Posterior vena cava (tissue), 2 donors: ENCODE measurements at regions of chr2 and their contacts with region 1.

Region 1: GRCh38 chr2:158968396-158969161 is at the start of gene TANC1:
- DNase-seq: peak; percentile 97
- total RNA-seq, gene TANC1: 35.1 to 44.5 TPM

Region 2: GRCh38 chr2:158914731-158915130 is 53.8 kb before region 1 on chr2:
- intact Hi-C with region 1: loop called in 1 of 2 experiments (anchors 10 kb)
- DNase-seq: no peak

Region 3: DNA sequence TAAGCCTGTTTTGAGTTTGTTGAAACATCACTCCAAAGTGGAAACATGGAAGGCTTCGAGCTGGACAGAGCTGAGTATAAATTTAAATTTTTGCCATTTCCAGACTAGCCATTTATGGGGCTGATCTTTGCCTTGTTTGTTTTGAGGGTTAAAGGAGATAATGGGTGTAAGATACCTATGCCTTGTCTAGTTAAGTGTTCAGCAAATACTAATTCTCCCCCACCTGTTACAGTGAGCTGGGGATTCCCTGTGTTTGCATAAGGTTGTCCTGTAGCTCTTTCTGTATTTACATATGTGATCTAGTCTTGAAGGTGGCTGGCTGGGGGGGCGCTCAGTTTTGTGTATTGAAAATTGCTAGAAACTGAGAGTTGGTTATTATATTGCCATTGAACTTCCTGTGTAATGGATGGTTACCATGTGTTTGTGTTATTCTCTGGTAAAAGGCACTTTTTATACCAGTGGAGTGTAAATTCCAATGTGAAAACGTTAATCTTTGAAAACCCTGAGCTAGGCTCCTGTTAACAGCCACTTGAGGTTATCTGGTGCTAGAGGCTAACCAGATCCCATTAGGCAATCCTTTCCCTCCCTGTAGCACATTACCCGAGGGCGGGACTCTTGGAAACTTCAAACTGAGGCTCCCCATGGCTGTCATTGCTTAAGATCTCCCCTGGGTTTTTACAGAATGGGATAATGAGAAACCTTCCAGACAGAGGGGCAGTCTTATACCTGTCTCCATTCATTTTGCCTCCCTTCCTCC is 26.5 kb after region 1 on chr2:
- intact Hi-C with region 1: no loop called
- DNase-seq: no peak

Region 4: GRCh38 chr2:159064446-159065301 is 96.1 kb after region 1 on chr2:
- intact Hi-C with region 1: no loop called
- DNase-seq: no peak

Region 5: DNA sequence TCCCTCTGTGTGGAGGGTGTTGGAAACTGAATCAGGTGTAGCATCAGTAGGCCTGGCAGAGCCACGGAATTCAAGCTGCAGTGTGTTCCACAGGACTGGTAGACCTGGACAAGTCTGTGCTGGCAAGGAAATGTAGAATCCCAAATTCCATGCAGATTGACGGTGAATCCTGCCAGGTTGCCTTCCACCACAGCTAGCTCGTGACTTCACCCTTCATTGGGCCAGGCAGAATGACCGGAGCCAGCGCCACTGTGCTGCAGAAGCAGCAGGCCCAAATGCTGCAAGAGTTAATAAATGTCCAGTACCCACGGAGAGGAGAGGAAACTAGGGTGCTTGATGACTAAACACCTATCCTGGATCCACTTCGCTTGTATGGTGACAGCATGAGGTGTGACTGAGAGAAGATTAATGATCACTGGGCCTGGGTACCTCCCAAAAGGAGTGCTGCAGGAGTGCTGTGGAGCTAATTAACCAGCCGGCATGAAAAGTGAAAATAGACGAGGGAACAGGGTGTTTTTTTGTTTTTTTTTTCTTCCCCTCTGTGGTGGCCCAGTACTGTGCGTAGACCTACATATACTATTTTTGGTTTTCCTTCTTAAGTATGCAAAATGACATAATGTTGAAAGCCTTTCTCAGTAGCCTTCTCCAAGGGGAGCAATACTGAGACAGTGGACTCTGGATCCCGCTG is 122.1 kb after region 1 on chr2:
- intact Hi-C with region 1: loop called in 1 of 2 experiments (anchors 10 kb)
- DNase-seq: no peak

Region 6: DNA sequence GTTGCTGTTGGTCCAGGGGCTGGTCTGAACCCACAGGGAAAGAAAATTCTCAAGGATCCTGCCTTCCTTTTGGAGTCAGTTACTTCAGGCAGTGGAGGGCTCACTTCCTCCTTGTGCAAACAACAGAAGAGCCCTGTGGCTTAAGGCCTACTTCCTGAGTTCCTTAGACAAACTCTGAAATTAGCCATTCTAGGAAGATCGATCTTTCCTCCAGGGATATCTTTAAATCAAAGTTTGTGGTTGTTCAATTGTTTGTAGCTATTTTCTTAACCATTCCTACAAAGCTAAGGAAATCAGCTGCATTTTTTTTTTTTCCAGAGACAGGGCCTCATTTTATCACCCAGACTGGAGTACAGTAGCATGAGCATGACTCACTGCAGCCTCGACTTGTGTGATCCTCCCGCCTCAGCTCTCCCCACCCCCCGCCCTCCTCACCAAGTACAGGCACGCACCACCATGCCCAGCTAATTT is 155.9 kb after region 1 on chr2:
- intact Hi-C with region 1: loop called in 1 of 2 experiments (anchors 10 kb)
- DNase-seq: no peak

Region 7: DNA sequence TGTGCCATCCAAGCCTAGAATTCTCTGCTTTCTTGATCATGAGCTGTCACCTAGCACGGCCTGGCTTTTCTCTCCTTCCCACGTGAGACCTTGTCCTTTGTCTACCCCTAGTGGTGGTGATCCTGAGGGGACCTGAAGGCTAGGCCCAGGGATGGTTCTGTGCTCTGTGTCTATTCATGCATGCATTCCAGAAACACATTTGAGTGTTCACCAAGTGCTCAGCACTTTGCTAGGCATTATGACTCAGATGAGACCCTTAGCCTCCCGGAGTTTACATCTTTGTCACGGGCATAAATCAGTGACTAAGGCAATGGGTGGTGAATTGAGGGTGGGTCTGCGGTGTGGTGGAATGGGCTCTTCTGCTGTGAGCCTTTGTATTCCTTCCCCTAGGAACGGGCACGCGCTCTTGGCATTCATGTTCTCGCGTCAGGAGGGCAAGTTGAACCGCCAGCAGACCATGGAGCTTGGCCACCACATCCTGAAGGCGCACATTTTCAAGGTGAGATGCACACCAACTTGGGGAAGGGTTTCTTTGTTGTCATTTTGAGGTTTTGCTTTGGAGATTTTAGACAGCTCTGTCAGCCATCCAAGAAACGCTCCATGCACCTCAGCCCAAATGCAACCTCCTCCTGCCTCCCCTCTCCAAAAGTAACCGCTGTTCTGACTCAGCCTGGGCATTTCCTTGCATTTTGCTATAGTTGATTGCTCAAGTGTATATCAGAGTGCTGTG is 217.0 kb after region 1 on chr2:
- intact Hi-C with region 1: no loop called
- DNase-seq: no peak